Cardiac septum (tissue), 1 donor: ENCODE measurements at regions of chr5 and their contacts with region 1.

Region 1: DNA sequence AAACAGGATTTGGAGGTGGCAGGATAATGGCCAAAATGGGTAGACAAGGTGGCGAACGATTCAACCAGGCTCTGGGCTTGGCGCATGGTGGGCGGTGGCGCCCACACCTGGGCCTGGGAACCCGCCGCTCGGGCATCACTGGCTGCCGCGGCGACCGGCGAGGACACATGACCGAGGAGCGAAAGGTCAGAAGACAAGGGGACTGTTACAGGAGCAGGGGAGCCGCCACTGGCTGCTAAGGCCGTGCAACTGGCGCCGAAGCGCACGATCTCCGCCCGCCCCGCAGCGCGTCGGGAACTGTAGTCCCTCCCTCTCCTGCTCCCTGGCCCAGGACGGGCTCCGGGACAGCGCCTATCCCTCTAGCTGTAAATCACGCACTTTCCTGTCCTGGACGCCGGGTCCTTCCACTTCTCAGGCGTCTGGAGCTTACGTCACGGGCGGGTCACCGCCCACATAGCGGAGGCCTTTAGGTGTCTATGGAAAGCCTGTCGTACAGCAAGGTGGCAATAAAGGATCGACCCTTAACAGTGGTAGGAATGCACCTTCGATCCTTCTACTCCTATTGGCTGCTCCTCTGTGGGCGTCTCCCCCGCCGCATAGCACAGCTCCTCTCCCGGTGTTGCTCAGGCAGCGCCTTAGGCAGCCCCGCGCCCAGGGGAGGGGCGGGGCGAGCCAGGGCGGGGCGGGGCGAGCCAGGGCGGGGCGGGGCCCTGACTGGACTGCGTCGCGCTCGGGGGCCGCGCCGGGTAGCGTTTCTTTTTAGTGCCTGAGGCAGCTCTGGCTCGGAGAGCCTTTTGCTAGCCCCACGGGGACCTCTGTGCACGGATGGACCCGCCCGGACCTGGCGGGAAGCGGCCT is at the start of gene ICE1:
- DNase-seq: peak; percentile 98
- total RNA-seq, gene ICE1: 19.8 TPM

Region 2: DNA sequence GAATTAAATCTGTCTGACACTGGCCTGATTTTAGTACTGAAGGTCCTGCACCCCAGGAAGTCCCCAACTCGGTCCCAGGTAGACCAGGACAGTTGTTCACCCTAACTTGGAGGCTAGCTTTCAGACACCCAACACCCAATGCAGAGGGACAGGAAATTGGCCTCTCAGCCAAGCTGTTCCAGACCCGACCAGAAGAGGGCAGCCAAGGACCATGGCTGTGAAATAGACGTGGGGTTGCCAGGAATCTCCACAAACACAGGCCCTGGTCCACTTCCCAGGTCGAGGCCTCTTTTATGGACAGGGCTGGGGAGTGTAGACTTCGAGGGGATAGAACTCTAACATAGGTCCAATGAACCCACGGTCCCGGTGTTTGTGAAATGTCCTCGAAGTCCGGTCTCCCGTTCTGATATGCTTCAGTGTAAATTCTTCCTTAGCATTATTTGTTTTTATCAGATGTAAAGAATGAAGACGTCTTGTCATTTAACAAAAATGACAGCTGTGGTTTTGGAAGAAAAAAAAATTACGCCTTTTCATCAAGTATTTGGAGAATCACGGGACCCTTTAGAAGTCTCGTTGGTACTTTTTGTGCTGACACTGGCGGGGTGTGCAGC is 542.4 kb before region 1 on chr5:
- intact Hi-C with region 1: loop called (anchors 2 kb)
- DNase-seq: no peak

Region 3: DNA sequence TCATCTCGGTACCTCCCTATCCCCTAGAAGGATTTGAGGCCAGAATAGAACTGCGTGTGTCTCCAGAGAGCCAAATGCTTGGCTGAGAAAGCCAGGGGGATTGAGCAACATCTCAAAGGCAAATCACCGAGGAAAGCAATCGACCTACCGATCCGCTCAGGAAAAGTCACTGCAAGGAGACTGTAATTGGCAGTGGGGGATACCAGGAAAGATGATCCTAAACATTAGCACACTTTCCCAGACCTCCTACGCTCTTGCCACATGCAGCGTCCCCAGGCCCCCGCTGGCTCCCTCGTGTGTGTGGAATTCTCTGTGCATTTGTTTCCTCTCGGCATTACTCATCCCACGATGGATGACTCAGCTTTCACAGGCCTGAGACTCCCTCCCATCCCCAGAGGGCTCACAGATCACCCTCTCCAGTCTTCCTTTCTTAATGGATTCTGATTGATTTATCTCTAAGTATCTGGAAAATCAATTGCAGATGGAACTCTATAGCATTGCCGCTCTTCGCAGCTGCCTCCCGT is 81.9 kb before region 1 on chr5:
- intact Hi-C with region 1: loop called (anchors 5 kb)
- DNase-seq: no peak